GM12878 (cell line): ENCODE measurements at regions of chr1 and their contacts with region 1.

Region 1: GRCh38 chr1:25997828-25998761 is at the start of gene PAFAH2:
- DNase-seq: peak; percentile 99
- ATAC-seq: peak; percentile 99
- H3K4me3 ChIP-seq: peak within 1 kb of the TSS; percentile 69
- H3K27ac ChIP-seq: peak within 1 kb of the TSS; percentile 67
- H3K4me1 ChIP-seq: peaks cover 12% of the 10 kb centered on the region
- H3K27me3 ChIP-seq: no peaks in the 10 kb centered on the region
- CTCF ChIP-seq: peak; percentile 93 to 99 (median 99)
- EP300 ChIP-seq: peak in 1 of 2 experiments; percentile 53; a peak in 1 of 4 replicates
- POLR2A ChIP-seq: no peak
- RAD21 ChIP-seq: peak; percentile 96
- polyA plus RNA-seq, gene PAFAH2: 3.0 to 4.0 TPM

Region 2: GRCh38 chr1:25819576-25820246 is 178.4 kb before region 1 on chr1 and contains the start of gene MTFR1L:
- CTCF ChIA-PET with region 1: interaction called, 24 read pairs
- POLR2A ChIA-PET with region 1: interaction called, 3 read pairs
- RAD21 ChIA-PET with region 1: interaction called, 13 read pairs
- SMC1A ChIA-PET with region 1: interaction called, 11 read pairs
- in situ Hi-C with region 1: loop called (anchors 5 kb)
- intact Hi-C with region 1: loop called (anchors 10 kb)
- DNase-seq: peak; percentile 66
- ATAC-seq: peak; percentile 95
- H3K4me3 ChIP-seq: peak within 1 kb of the TSS; percentile 83
- H3K27ac ChIP-seq: peak within 1 kb of the TSS; percentile 73
- H3K4me1 ChIP-seq: peaks cover 15% of the 10 kb centered on the region
- H3K27me3 ChIP-seq: no peaks in the 10 kb centered on the region
- CTCF ChIP-seq: no peak
- EP300 ChIP-seq: no peak
- POLR2A ChIP-seq: peak; percentile 89
- RAD21 ChIP-seq: no peak
- polyA plus RNA-seq, gene MTFR1L: 26.7 to 30.0 TPM

Region 3: GRCh38 chr1:25837262-25837875 is 160.7 kb before region 1 on chr1:
- CTCF ChIA-PET with region 1: interaction called, 12 read pairs
- POLR2A ChIA-PET with region 1: interaction called, 3 read pairs
- RAD21 ChIA-PET with region 1: interaction called, 11 read pairs
- SMC1A ChIA-PET with region 1: interaction called, 25 read pairs
- in situ Hi-C with region 1: no loop called
- intact Hi-C with region 1: no loop called
- DNase-seq: no peak
- ATAC-seq: peak; percentile 49; the same call in 2 of the 3 replicates
- H3K4me3 ChIP-seq: no peak overlapping the region
- H3K27ac ChIP-seq: no peak overlapping the region
- H3K4me1 ChIP-seq: no peaks in the 10 kb centered on the region
- H3K27me3 ChIP-seq: no peaks in the 10 kb centered on the region
- CTCF ChIP-seq: peak; percentile 40 to 54 (median 50); a peak in 5 of 6 replicates
- EP300 ChIP-seq: no peak
- POLR2A ChIP-seq: no peak
- RAD21 ChIP-seq: peak; percentile 49

Region 4: DNA sequence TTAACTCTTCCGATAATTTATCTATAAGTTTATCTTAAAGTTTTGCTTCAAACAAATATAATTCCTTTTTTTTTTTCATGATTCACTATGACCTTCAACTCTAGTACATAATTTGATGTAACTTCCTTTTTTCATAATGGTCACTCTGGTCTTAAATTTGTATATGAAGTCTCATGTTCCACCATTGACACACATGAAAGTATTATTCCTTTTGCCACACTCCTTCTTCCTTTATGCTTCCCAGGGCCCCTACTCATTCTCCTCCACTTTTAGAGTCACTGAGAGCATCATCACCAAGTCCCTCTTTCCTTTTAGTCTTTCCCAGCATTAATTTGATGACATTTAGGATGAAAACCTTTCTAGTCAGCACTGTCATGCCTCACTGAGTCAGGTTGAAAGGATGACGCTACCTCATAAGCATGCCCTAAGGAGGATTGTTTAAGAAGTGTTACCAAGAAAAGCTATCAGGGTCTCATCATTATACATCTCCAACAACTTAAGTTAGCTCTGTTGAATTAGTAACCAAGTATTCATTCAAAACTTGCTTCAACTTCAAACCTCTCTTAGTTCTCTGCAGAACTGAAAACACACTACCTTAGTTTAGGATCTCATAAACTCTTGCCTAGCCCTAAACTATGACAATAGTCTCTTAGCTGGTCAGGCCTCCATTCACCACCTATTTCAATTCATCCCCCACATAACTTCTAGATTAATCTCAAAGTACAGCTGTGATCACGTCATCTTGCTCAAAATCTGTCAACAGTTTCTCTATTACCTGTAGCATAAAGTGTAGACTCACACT is 153.4 kb before region 1 on chr1:
- CTCF ChIA-PET with region 1: interaction called, 12 read pairs
- POLR2A ChIA-PET with region 1: interaction called, 3 read pairs
- RAD21 ChIA-PET with region 1: interaction called, 11 read pairs
- SMC1A ChIA-PET with region 1: interaction called, 11 read pairs
- in situ Hi-C with region 1: no loop called
- intact Hi-C with region 1: no loop called
- DNase-seq: no peak
- ATAC-seq: peak; percentile 95
- H3K4me3 ChIP-seq: no peak overlapping the region
- H3K27ac ChIP-seq: peak overlapping the region; percentile 29
- H3K4me1 ChIP-seq: peaks cover 8% of the 10 kb centered on the region; the same call in 1 of the 2 replicates
- H3K27me3 ChIP-seq: no peaks in the 10 kb centered on the region
- CTCF ChIP-seq: no peak
- EP300 ChIP-seq: no peak
- POLR2A ChIP-seq: no peak
- RAD21 ChIP-seq: no peak

Region 5: DNA sequence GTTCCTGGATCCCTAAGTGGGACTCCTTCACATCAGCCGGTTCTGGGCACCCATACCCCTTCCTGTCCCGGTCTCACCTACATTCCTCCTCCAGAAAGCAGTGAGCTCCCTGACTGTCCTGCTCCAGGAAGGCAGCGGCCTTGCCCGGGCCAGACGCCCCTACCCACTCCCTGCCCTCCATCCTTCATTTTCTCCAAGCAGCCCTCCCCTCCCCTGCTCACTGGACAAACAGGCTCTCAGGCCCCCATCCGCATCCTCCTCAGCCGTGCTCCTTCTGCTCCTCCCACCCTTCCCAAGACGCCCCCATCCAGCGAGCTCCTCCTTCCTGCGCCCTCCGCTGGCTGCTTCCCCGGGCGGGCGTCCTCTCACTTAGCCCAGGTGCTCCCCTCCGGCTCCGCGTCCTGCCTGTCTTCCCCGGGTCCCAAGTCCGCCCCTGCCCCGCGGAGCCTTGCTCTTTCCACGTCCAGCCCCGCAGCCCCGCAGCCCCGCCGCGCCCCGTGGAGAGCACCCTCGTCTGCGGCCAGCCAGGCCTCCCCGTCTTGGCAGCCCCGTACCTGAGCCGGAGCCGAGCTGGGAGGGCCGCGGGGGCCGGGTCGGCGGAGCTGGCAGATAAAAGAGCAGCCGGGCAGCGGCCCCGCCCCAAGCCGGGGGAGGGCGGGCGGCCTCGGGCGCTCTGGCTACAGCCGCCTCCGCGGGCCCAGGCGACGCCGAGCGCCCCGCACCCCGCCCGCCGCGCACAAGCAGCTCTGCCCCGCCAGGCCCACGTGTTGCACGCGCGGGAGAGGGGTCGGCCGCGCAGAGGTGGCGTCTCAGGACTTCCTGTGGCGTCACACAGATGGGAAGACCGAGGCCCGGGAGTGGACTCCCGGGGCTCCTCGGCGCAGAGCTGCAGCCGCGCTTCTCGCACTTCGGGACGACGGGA is 122.9 kb before region 1 on chr1 and contains the start of gene PAQR7:
- CTCF ChIA-PET with region 1: interaction called, 11 read pairs
- POLR2A ChIA-PET with region 1: interaction called, 9 read pairs
- RAD21 ChIA-PET with region 1: interaction called, 11 read pairs
- SMC1A ChIA-PET with region 1: interaction called, 8 read pairs
- in situ Hi-C with region 1: no loop called
- intact Hi-C with region 1: no loop called
- DNase-seq: no peak
- ATAC-seq: peak; percentile 86
- H3K4me3 ChIP-seq: peak within 1 kb of the TSS; percentile 76
- H3K27ac ChIP-seq: peak within 1 kb of the TSS; percentile 27
- H3K4me1 ChIP-seq: peaks cover 34% of the 10 kb centered on the region
- H3K27me3 ChIP-seq: no peaks in the 10 kb centered on the region; a peak in 1 of 4 replicates
- CTCF ChIP-seq: no peak
- EP300 ChIP-seq: no peak
- POLR2A ChIP-seq: peak; percentile 51; the same call in 1 of the 2 replicates
- RAD21 ChIP-seq: no peak
- polyA plus RNA-seq, gene PAQR7: 1.1 to 2.5 TPM

Region 6: GRCh38 chr1:25904943-25905679 is 93.0 kb before region 1 on chr1:
- CTCF ChIA-PET with region 1: interaction called, 383 read pairs
- POLR2A ChIA-PET with region 1: interaction called, 116 read pairs
- RAD21 ChIA-PET with region 1: interaction called, 296 read pairs
- SMC1A ChIA-PET with region 1: interaction called, 319 read pairs
- in situ Hi-C with region 1: no loop called
- intact Hi-C with region 1: loop called (anchors 1 kb)
- DNase-seq: peak; percentile 63
- ATAC-seq: peak; percentile 91
- H3K4me3 ChIP-seq: peak overlapping the region; percentile 100
- H3K27ac ChIP-seq: peak overlapping the region; percentile 94
- H3K4me1 ChIP-seq: peaks cover 5% of the 10 kb centered on the region; the same call in 1 of the 2 replicates
- H3K27me3 ChIP-seq: no peaks in the 10 kb centered on the region; a peak in 3 of 4 replicates
- CTCF ChIP-seq: peak in 1 of 3 experiments; percentile 24; a peak in 1 of 6 replicates
- EP300 ChIP-seq: no peak
- POLR2A ChIP-seq: no peak
- RAD21 ChIP-seq: no peak

Region 7: DNA sequence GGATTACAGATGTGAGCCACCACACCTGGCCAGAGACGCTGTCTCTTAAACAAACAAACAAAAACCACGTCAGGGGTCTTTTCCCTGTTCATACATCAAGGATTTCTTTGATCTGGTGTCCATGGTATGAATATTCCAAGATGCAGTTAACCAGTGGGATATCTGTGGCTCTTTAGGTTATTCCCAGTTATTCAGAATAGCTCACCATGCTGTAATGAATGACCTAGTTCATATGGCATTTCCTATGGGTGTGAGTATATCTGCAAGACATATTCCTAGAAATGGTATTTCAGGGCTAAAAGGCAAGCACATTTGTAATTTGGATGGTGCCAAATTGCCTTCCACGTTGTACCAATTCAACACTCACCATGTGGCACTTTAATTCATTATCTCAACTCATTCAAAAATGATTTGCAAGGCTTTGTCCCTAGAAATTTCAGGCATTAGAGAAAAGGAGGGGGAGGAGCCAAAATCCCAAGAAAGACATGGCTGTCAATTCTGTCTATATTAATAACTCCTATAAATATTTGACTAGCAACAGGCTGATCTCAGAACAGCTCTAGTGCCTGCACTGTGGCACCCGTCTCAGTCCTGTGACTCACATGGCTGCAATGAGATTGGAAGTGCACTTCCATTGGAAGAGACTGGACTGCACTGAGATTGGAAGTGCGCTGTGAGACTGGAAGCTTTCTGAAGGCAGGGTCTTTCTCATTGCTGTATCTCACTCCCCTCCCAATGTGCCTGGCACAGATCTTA is 85.8 kb before region 1 on chr1:
- CTCF ChIA-PET with region 1: interaction called, 11 read pairs
- POLR2A ChIA-PET with region 1: no interaction called
- RAD21 ChIA-PET with region 1: interaction called, 4 read pairs
- SMC1A ChIA-PET with region 1: interaction called, 319 read pairs
- in situ Hi-C with region 1: no loop called
- intact Hi-C with region 1: no loop called
- DNase-seq: no peak
- ATAC-seq: no peak
- H3K4me3 ChIP-seq: no peak overlapping the region
- H3K27ac ChIP-seq: no peak overlapping the region
- H3K4me1 ChIP-seq: no peaks in the 10 kb centered on the region
- H3K27me3 ChIP-seq: no peaks in the 10 kb centered on the region; a peak in 2 of 4 replicates
- CTCF ChIP-seq: no peak
- EP300 ChIP-seq: no peak
- POLR2A ChIP-seq: no peak
- RAD21 ChIP-seq: no peak

Region 8: GRCh38 chr1:26300586-26301275 is 302.6 kb after region 1 on chr1:
- CTCF ChIA-PET with region 1: no interaction called
- POLR2A ChIA-PET with region 1: no interaction called
- RAD21 ChIA-PET with region 1: no interaction called
- SMC1A ChIA-PET with region 1: no interaction called
- in situ Hi-C with region 1: no loop called
- intact Hi-C with region 1: no loop called
- DNase-seq: no peak
- ATAC-seq: no peak
- H3K4me3 ChIP-seq: no peak overlapping the region
- H3K27ac ChIP-seq: no peak overlapping the region
- H3K4me1 ChIP-seq: peaks cover 3% of the 10 kb centered on the region
- H3K27me3 ChIP-seq: no peaks in the 10 kb centered on the region
- CTCF ChIP-seq: no peak
- EP300 ChIP-seq: no peak
- POLR2A ChIP-seq: no peak
- RAD21 ChIP-seq: no peak